GM12878 (cell line): ENCODE measurements at regions of chr15 and their contacts with region 1.

Region 1: DNA sequence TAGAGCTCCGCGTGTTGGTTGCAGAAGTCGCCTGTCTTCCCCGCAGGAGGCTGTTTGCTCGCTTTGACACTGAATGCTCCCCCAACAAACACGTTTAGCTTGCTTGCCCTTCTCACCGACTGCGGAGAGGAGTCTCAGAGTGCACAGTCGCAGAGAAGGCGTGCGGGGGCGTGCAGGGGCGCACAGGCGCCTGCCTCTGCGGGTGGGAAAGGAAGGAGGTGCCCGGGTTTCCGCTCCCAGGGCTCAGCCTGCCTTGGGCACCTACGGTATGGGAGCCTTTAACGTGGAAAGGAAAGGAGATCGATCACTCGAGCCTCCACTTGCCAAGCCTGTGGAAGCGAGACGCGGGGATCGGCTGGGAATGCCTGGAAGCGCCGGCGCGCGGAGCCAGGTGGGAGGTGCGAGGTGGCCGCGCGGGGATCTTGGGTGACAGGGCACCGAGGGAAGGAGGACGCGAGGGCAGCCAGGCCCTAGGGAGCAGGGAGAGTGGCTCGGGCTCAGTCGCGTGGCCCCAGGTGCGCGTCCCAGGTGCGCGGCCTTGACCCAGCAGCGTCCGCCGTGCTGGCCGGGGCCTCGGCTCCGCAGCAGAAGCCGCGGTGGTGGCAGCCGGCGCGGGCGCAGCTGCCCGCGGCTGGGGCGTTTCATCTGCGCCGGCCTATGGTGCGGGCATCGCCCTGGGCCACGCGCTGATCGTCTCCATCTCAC is at the start of gene FAN1:
- DNase-seq: peak; percentile 77
- ATAC-seq: peak; percentile 94
- H3K4me3 ChIP-seq: peak within 1 kb of the TSS; percentile 73
- H3K27ac ChIP-seq: peak within 1 kb of the TSS; percentile 68
- H3K4me1 ChIP-seq: no peaks in the 10 kb centered on the region
- H3K27me3 ChIP-seq: no peaks in the 10 kb centered on the region
- CTCF ChIP-seq: no peak
- EP300 ChIP-seq: no peak
- POLR2A ChIP-seq: peak; percentile 93
- RAD21 ChIP-seq: no peak
- polyA plus RNA-seq, gene FAN1: 0.55 to 1.0 TPM

Region 2: GRCh38 chr15:31200735-31201151 is 297.1 kb after region 1 on chr15:
- CTCF ChIA-PET with region 1: no interaction called
- POLR2A ChIA-PET with region 1: no interaction called
- RAD21 ChIA-PET with region 1: no interaction called
- SMC1A ChIA-PET with region 1: no interaction called
- in situ Hi-C with region 1: no loop called
- intact Hi-C with region 1: loop called (anchors 5 kb)
- DNase-seq: no peak
- ATAC-seq: peak; percentile 83
- H3K4me3 ChIP-seq: no peak overlapping the region
- H3K27ac ChIP-seq: no peak overlapping the region
- H3K4me1 ChIP-seq: peaks cover 30% of the 10 kb centered on the region
- H3K27me3 ChIP-seq: no peaks in the 10 kb centered on the region
- CTCF ChIP-seq: peak; percentile 61 to 88 (median 74)
- EP300 ChIP-seq: no peak
- POLR2A ChIP-seq: no peak
- RAD21 ChIP-seq: peak; percentile 79